HEK293 (cell line): ENCODE measurements at regions of chr3 and their contacts with region 1.

Region 1: DNA sequence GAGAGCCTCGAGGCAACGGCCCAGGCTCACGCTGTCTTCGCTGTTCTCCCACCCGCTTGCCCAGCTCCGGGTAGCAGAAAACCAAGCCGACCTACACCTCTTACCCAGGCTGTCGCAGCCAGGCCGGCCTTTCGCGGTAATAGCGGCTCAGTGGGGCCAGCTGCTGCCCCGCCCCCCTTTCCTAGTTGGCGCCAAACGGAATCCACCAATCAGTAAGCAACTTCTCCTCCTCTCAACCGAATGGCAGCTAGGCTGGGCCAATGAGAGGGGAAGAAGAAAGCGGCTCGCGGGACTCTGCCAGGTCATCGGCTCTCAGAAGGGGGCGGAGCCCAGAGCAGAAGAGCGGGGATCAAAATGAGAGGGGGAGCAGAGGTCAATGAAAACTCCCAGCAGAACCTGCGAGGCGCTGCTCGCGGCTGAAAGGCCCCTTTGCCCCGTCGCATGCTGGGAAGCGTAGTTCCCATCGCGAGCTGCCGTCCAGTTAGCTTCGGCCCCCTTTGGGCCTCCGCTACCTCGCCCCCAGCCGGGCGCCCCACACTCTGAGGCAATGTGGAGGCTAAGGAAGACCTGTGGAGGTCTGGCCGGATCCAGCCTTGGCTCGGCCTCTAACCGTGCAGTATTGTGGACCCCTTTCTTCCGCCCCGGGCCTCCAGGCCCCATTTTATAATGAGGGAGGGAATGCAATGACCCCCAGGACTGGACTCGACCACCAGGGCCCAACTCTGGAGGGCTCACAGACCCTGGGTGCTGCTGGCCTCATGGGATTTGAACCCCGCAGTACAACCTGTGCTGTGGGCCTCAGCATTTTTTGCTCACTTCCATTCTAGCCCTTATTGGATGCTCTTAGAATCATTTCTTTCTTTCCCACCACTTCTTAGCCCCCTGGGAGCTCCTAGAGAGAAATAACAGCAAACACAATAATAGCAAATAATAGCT is at the start of gene CDC25A:
- H3K4me3 ChIP-seq: peak within 1 kb of the TSS; percentile 96
- H3K27ac ChIP-seq: peak within 1 kb of the TSS; percentile 85
- H3K4me1 ChIP-seq: no peaks in the 10 kb centered on the region
- CTCF ChIP-seq: 0 out of 2 replicates have a peak, but pooled peaks have one; percentile 19

Region 2: DNA sequence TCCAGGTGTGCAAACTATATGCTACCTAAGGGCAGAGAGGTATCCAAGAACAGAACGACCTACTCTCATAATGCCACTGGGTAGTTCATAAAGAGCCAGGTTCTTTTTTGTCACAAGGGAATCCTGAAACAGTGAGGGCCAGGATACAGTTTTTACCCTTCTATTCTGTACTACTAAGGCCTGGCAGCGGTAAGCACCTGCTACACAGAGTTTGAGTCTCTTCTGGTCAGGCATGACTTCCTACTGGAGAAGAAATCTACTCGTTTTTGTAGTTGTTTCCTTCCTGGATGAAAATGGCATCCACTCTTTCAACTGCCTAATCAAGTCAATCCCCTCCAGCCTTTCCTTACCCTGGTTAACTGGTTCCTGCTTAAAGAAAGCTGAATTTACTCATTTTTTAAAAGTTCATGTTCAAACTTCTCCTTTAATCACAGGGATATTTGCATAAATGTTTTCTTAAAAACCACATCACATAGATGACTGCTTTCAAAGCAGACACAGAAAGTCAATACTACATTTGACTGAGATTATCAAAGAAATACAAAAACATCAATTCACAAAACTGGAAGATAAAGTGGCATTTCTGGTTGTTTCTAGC is 212.3 kb before region 1 on chr3:
- CTCF ChIA-PET with region 1: no interaction called
- POLR2A ChIA-PET with region 1: no interaction called
- H3K4me3 ChIP-seq: no peak overlapping the region
- H3K27ac ChIP-seq: no peak overlapping the region
- H3K4me1 ChIP-seq: peaks cover 2% of the 10 kb centered on the region; the same call in 1 of the 2 replicates
- CTCF ChIP-seq: no peak

Region 3: DNA sequence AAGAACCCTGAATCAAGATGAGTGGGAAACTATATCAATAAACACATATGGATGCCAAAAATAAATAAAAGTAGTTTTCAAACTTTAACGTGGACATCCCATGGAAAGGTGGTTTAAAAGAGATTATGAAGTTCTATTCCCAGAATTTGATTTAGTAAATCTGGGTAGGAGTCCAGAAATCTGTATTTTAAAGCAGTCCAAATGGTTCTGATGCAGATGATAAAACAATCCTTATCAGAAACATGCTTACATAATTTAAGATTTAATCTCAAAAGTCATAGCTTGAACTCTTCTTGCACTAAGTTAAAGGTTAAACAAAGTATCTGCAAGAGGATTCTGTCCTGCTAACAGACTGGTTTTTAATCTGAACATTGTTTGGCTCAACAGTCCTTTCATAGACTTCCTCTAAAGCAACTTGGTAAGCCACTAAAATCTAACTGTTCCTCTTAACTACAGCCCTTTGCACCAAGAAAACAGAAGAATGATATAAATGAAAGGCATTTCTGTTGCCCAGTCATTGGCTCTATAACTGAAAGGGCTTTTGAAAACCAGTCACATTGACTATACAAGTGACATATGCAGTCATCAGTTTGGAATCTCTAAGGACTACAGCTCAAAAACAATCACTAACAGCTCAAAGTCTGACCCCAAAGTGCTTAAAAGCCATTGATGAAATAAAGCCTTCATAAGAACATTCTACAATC is 148.9 kb before region 1 on chr3:
- CTCF ChIA-PET with region 1: no interaction called
- POLR2A ChIA-PET with region 1: no interaction called
- H3K4me3 ChIP-seq: no peak overlapping the region
- H3K27ac ChIP-seq: no peak overlapping the region; the same call in 1 of the 2 replicates
- H3K4me1 ChIP-seq: peaks cover 6% of the 10 kb centered on the region
- CTCF ChIP-seq: no peak

Region 4: GRCh38 chr3:48240711-48241491 is 52.4 kb after region 1 on chr3 and contains the start of gene ZNF589:
- CTCF ChIA-PET with region 1: interaction called, 6 read pairs
- POLR2A ChIA-PET with region 1: interaction called, 16 read pairs
- H3K4me3 ChIP-seq: peak within 1 kb of the TSS; percentile 71
- H3K27ac ChIP-seq: peak within 1 kb of the TSS; percentile 84
- H3K4me1 ChIP-seq: no peaks in the 10 kb centered on the region
- CTCF ChIP-seq: peak; percentile 73